ENCODE measurements at regions of chr11 and their contacts with region 1.

Region 1: DNA sequence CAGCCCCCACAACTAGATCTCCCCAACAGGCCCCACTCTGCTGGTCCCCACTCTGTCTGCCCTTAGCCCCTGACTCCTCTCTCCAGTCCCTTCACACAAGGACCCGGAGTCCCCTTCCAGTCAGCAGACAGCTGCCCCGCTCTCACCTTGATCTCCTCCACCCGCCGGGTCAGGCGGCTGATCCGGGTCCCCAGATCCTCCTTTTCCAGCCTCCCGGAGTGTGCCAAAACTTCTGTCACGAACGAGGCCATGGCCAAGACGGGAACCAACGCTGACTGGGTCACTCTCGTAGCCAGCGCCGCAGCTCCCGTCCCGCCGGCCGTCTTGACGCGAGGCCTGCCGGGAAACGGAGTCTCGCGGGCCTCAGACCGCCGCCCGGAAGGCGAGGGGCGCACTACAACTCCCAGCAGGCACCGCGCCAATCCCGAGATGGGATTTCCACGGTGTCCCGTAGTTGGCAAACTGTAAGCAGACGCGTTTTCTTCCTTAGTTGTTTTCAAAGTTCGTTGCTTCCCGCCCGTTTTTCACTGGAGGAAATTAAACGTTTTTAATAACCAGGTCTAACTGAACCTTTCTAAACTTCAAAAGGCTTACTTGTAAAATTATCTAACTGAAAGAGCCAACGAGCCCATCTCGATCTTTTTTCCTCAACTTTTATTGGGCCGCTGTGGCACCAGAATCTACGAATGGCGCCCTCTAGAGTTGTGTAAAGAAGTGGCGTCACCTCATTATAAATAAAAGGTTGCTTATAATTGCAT is at the start of gene ZW10:
- DNase-seq: peak; percentile 90
- H3K4me3 Mint-ChIP-seq: peak within 1 kb of the TSS; percentile 100
- H3K27ac Mint-ChIP-seq: peak within 1 kb of the TSS; percentile 97
- H3K4me1 Mint-ChIP-seq: peaks cover 14% of the 10 kb centered on the region
- H3K27me3 Mint-ChIP-seq: peaks cover 5% of the 10 kb centered on the region
- total RNA-seq, gene ZW10: 20.5 and 22.6 TPM in 2 replicates

Region 2: GRCh38 chr11:111878849-111879636 is 1894.6 kb before region 1 on chr11 and contains the starts of genes CFAP68 and FDXACB1:
- intact Hi-C with region 1: loop called (anchors 5 kb)
- DNase-seq: peak; percentile 92
- H3K4me3 Mint-ChIP-seq: peak within 1 kb of the TSS; percentile 94
- H3K27ac Mint-ChIP-seq: peak within 1 kb of the TSS; percentile 100
- H3K4me1 Mint-ChIP-seq: peaks cover 26% of the 10 kb centered on the region
- H3K27me3 Mint-ChIP-seq: peaks cover 2% of the 10 kb centered on the region
- total RNA-seq, gene CFAP68: 17.7 and 22.3 TPM in 2 replicates
- total RNA-seq, gene FDXACB1: 7.9 and 9.4 TPM in 2 replicates

Region 3: DNA sequence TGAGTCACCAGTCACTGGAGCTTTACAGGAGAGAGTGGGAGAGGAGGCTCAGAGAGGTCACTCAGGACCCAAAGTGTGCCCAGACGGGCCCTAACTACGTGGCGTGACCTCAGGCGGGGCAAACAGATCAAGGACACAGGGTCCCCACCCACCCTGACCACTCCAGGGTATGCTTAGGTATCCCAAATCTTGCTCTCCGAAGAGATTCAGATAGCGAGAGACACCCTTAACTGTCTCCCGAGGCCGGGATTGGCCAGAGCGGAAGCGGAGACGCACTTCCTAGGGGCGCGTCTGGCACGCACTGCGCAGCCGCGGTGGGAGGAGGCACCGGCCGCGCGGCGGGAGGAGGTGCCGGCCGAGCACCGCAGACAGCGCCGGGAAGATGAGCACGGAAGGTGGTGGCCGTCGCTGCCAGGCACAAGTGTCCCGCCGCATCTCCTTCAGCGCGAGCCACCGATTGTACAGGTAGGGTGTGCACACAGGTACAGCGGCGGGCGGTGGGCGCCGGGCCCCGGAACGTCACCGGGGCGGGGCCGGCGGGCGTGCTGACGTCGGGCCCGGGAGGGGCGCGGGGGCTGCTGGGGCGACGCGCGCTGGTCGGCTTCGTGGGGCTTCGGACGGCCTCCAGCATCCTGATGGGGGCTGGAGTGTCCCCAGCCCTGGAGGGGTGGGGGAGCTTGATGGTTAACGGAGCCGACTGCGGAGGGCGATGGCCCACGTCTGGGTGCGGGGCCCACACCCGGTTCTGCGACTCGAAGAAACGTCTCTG is 1547.3 kb before region 1 on chr11 and contains the start of gene PTS:
- intact Hi-C with region 1: loop called (anchors 5 kb)
- DNase-seq: peak; percentile 83
- H3K4me3 Mint-ChIP-seq: peak within 1 kb of the TSS; percentile 84
- H3K27ac Mint-ChIP-seq: peak within 1 kb of the TSS; percentile 91
- H3K4me1 Mint-ChIP-seq: peaks cover 29% of the 10 kb centered on the region
- H3K27me3 Mint-ChIP-seq: peaks cover 1% of the 10 kb centered on the region
- total RNA-seq, gene PTS: 28.9 and 35.0 TPM in 2 replicates

Region 4: GRCh38 chr11:113314389-113315301 is 458.9 kb before region 1 on chr11 and contains the start of gene TTC12:
- intact Hi-C with region 1: loop called (anchors 1 kb)
- DNase-seq: peak; percentile 89
- H3K4me3 Mint-ChIP-seq: peak within 1 kb of the TSS; percentile 81
- H3K27ac Mint-ChIP-seq: peak within 1 kb of the TSS; percentile 70
- H3K4me1 Mint-ChIP-seq: peaks cover 20% of the 10 kb centered on the region
- H3K27me3 Mint-ChIP-seq: no peaks in the 10 kb centered on the region
- total RNA-seq, gene TTC12: 7.4 and 8.5 TPM in 2 replicates

Region 5: DNA sequence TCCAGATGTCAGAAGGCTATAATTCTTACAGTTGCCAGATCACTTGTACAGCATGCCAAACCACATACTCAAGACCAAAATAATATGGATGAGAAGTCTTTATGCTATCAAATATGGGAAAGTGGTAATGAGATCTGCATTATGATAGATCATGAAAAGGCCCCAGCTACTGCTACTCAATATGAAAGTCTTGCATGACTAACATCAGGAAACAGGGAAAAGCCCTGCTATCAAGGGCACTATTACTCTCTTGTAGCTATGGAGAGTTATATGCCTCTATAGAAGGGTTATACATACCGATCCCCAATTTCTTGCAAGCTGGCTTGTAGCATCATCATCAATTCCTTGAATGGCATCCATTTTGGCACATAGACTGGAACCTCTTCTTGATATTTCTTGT is 37.3 kb before region 1 on chr11:
- intact Hi-C with region 1: loop called (anchors 1 kb)
- DNase-seq: no peak
- H3K4me3 Mint-ChIP-seq: no peak overlapping the region
- H3K27ac Mint-ChIP-seq: peak overlapping the region; percentile 9
- H3K4me1 Mint-ChIP-seq: peaks cover 8% of the 10 kb centered on the region
- H3K27me3 Mint-ChIP-seq: no peaks in the 10 kb centered on the region

Region 6: DNA sequence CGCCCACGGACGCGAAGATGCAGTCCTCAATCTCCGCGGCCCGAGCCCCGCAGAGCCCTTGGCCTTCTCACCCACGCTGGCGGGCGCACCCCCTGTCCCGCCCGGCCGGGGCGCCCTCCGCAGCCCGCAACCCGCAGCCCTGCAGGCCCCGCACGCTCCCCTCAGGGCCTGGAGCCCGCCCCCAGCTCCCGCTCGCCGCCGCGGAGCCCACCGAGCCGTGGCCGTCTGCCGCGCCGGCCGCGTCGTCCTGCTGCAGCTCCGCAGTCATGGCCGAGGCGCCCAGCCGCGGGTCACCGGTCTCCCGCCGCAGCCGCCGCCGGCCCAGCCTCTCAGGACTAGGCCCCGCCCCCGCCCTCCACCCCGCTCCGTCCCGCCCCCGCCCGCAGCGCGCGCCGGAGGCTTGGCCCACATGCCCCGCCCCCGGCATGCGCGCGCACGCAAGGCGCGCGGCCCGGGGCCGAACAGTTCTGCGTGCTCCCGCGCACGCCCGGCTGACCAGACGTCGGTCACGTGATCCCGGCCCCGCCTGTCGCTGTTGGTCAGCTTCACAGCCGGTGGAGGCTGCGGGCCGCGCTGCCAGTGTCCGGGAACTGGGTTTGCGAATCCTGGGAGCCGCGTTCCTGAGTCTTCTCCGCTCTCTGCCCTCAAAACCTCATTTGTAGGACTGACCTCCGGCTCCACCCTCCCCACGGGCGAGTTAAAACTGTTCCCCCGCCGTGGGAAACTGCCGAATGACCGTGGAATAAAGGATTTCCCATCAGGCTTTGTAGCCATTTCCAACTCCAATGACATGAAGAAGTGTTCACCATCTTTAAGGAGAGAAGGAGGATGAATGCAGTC is 101.9 kb after region 1 on chr11 and contains the start of gene USP28:
- intact Hi-C with region 1: loop called (anchors 1 kb)
- DNase-seq: peak; percentile 81
- H3K4me3 Mint-ChIP-seq: peak within 1 kb of the TSS; percentile 98
- H3K27ac Mint-ChIP-seq: peak within 1 kb of the TSS; percentile 99
- H3K4me1 Mint-ChIP-seq: peaks cover 64% of the 10 kb centered on the region
- H3K27me3 Mint-ChIP-seq: no peaks in the 10 kb centered on the region
- total RNA-seq, gene USP28: 29.0 and 30.9 TPM in 2 replicates

Region 7: DNA sequence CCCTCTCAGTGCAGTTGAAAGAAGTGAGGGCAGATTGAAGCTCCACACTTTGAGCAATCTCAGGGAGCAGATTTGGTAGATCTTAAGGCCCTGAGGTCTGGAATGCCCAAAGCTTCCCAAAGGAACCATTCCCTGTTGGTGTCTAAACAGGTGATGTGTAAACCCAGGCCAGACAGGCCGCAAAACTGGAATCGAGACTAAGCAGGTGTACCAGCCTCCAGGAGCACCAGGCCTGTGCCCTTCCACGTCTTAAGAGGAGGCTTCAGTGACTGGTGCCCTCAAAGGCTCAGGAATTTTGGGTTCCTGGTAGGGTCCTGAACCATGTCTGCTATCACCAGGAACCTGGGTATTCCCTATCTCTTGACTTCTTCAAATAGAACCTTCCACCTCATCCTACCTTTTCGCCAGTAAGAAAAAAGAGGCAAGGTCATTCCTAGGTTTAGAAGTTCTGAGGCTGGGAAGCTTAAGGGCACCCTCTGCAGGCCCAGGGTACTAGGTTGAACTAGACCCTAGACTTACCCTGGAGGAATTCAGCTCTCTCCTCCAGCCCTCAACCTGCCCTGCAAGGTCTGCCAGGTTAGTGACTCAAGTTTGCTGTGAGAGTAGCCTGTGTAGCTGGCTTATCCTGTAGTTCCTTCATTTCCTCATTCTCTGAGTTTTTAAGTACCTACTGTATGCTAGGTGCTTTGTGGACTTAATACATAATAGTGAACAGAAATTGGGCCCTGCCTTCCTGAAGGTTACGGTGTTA is 422.6 kb after region 1 on chr11:
- intact Hi-C with region 1: no loop called
- DNase-seq: no peak
- H3K4me3 Mint-ChIP-seq: no peak overlapping the region
- H3K27ac Mint-ChIP-seq: no peak overlapping the region
- H3K4me1 Mint-ChIP-seq: no peaks in the 10 kb centered on the region
- H3K27me3 Mint-ChIP-seq: no peaks in the 10 kb centered on the region

Region 8: DNA sequence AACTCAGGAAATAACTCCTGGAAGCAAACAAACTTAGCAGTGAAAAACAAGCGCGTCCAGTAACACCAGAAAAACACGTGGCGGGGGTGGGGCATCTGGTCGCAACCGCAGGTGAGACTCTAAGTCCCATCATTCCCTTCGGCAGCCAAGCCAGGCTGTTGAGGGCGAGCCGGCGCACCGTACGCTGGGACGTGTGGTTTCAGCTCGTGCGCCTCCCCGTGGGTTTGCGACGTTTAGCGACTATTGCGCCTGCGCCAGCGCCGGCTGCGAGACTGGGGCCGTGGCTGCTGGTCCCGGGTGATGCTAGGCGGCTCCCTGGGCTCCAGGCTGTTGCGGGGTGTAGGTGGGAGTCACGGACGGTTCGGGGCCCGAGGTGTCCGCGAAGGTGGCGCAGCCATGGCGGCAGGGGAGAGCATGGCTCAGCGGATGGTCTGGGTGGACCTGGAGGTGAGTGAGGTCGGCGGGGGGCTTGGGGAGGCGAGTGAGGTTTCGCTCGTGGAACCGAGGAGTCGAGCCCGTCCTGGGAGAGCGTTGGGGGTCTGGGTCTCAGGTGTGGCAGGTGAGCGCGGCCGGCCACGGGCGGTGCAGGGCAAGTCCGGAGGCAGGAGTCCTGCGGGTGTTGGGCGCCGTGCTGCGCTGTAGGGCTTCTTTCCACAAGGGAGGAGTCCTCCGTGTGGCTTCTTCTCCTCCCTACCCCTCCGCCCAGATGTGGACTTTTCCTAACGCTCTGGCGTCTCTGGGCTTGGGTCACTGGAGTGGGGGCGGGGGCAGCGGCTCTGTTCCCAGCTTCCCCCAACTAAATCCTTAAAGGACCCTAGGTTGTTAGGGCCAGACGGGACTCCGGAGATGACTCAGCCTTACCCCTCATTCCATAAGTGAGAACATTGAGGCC is 665.9 kb after region 1 on chr11 and contains the start of gene REXO2:
- intact Hi-C with region 1: loop called (anchors 1 kb)
- DNase-seq: peak; percentile 92
- H3K4me3 Mint-ChIP-seq: peak within 1 kb of the TSS; percentile 91
- H3K27ac Mint-ChIP-seq: peak within 1 kb of the TSS; percentile 94
- H3K4me1 Mint-ChIP-seq: peaks cover 48% of the 10 kb centered on the region
- H3K27me3 Mint-ChIP-seq: no peaks in the 10 kb centered on the region
- total RNA-seq, gene REXO2: 109 and 111 TPM in 2 replicates